MCF 10A (cell line): ENCODE measurements at regions of chr5 and their contacts with region 1.

Region 1: DNA sequence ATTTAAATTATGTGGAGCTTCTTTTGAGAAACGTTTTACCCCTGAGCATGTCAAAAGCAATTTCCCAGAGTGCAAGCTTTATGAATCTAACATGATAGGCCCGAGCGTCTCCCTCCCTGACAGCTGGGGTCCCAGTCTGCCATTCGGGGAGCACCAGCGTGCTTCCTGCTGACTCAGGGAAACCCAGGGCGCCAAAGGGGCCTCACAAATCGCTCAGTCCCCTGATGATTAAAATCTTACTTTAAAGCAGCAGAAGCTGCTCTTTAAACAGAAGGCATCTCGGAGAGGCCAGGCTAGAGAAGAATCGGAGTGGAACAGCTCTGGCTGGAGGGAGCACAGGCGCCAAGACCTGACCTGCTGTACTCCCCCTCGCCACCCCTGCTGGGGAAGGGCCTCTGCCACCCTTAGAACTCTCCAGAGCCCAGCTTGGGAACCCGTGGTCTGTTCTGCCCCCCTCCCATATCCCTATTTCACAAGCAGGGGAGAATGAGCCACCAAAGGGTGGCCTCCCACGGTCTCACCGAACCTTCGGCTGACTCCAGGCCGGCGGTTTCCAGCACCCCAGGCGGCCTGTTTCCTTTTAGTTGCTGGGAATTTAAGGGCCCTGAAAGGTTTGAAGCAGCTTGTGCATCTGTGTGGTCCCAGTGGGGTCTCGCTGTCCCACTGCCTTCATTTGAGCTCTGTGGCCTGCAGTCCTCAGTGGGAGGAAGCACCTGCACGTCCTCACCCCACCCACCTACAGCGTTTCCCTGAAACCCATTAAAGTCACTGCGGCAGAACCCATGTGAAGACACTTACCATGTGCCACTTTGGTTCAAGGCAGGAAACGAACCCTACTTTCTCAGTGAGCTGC is 147.6 kb downstream of the COL23A1 start:
- DNase-seq: no peak
- H3K4me3 Mint-ChIP-seq: no peak overlapping the region
- H3K27ac Mint-ChIP-seq: no peak overlapping the region
- H3K4me1 Mint-ChIP-seq: no peaks in the 10 kb centered on the region
- H3K27me3 Mint-ChIP-seq: peaks cover 13% of the 10 kb centered on the region
- CTCF ChIP-seq: no peak

Region 2: GRCh38 chr5:178090858-178091540 is 351.6 kb before region 1 on chr5:
- CTCF ChIA-PET with region 1: no interaction called
- POLR2A ChIA-PET with region 1: no interaction called
- intact Hi-C with region 1: no loop called
- DNase-seq: no peak
- H3K4me3 Mint-ChIP-seq: no peak overlapping the region
- H3K27ac Mint-ChIP-seq: no peak overlapping the region
- H3K4me1 Mint-ChIP-seq: peaks cover 12% of the 10 kb centered on the region
- H3K27me3 Mint-ChIP-seq: peaks cover 37% of the 10 kb centered on the region
- CTCF ChIP-seq: no peak

Region 3: DNA sequence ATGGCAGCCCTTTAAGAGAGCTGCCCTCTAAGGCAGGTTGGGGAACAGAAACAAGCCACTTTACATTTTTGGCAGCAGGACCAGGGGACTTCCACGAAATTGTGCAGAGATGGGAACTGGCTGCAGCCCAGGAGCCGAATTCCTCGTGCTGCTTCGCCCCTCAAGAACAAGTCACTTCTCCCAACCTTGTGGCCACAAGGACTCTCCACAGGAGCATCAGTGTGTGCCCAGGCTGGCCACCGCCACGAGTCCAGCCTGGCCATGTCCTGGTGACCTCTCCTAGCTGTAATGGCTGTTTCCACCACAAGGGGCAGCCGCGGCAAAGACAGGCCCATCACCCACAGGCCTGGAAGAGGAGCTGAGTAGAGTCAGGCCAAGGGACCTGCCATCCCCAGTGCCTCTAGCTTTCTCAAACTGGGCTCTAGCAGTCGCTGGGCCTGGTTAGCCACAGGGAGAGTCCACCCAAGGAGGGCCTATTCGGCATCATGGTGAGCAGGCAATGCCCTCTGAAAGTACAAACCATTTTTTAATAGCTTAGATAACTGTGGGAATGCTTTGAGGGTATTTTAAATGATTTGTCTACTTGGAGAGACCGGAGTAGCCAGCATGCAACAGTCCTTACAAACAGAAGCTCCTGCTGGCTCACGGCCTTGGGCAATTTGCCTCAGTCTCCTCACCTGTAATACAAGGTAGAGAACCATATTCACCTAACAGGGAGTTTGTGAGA is 18.5 kb after region 1 on chr5:
- CTCF ChIA-PET with region 1: interaction called, 15 read pairs
- POLR2A ChIA-PET with region 1: interaction called, 4 read pairs
- intact Hi-C with region 1: no loop called
- DNase-seq: peak; percentile 77
- H3K4me3 Mint-ChIP-seq: no peak overlapping the region
- H3K27ac Mint-ChIP-seq: no peak overlapping the region
- H3K4me1 Mint-ChIP-seq: peaks cover 5% of the 10 kb centered on the region
- H3K27me3 Mint-ChIP-seq: no peaks in the 10 kb centered on the region
- CTCF ChIP-seq: peak; percentile 95

Region 4: GRCh38 chr5:178526773-178527457 is 84.3 kb after region 1 on chr5:
- CTCF ChIA-PET with region 1: no interaction called
- POLR2A ChIA-PET with region 1: no interaction called
- intact Hi-C with region 1: no loop called
- DNase-seq: no peak
- H3K4me3 Mint-ChIP-seq: peak overlapping the region; percentile 10
- H3K27ac Mint-ChIP-seq: no peak overlapping the region
- H3K4me1 Mint-ChIP-seq: peaks cover 14% of the 10 kb centered on the region
- H3K27me3 Mint-ChIP-seq: no peaks in the 10 kb centered on the region
- CTCF ChIP-seq: no peak